PC-3 (cell line): ENCODE measurements at regions of chr18 and their contacts with region 1.

Region 1: GRCh38 chr18:60090170-60090569 is 190.4 kb downstream of the PMAIP1 start:
- DNase-seq: peak; percentile 11
- ATAC-seq: no peak
- H3K4me3 ChIP-seq: no peak overlapping the region
- H3K27ac ChIP-seq: no peak overlapping the region
- H3K4me1 ChIP-seq: no peaks in the 10 kb centered on the region
- H3K27me3 ChIP-seq: no peaks in the 10 kb centered on the region
- CTCF ChIP-seq: peak; percentile 46; the same call in 1 of the 2 replicates

Region 2: DNA sequence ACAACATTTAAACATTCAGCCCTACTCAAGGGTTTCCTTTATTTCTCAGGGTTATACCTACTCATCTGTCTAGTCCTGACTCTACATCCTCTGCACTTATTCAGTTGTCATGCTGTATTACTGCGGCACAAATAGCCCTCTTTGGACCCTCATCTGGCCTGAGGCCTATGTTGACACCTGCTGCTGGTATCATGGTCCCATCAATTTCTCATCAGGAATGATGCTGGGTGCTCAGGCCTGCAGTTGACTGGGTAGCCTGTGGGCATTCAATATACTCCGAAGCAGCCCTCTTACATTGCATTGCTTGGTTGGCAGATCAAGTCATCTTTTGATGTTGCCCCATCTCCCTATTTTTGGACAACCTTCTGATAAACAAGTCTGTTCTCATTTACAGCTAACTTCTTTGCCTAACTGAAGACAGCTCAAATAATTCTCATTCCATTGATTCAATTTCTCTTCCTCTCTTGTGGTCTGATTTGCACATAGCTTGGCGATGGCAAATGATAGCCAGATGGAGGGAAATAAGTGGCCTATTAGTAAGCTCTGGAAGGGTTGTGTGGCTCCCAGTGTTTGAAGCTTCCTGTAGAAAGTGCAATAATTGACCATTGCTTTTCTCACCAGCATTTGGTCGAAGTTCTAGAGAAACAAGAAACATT is 301.5 kb after region 1 on chr18:
- CTCF ChIA-PET with region 1: interaction called, 12 read pairs
- POLR2A ChIA-PET with region 1: no interaction called
- intact Hi-C with region 1: no loop called
- DNase-seq: no peak
- ATAC-seq: no peak
- H3K4me3 ChIP-seq: no peak overlapping the region
- H3K27ac ChIP-seq: no peak overlapping the region
- H3K4me1 ChIP-seq: no peaks in the 10 kb centered on the region
- H3K27me3 ChIP-seq: no peaks in the 10 kb centered on the region
- CTCF ChIP-seq: no peak